PC-3 (cell line): ENCODE measurements at regions of chr3 and their contacts with region 1.

Region 1: DNA sequence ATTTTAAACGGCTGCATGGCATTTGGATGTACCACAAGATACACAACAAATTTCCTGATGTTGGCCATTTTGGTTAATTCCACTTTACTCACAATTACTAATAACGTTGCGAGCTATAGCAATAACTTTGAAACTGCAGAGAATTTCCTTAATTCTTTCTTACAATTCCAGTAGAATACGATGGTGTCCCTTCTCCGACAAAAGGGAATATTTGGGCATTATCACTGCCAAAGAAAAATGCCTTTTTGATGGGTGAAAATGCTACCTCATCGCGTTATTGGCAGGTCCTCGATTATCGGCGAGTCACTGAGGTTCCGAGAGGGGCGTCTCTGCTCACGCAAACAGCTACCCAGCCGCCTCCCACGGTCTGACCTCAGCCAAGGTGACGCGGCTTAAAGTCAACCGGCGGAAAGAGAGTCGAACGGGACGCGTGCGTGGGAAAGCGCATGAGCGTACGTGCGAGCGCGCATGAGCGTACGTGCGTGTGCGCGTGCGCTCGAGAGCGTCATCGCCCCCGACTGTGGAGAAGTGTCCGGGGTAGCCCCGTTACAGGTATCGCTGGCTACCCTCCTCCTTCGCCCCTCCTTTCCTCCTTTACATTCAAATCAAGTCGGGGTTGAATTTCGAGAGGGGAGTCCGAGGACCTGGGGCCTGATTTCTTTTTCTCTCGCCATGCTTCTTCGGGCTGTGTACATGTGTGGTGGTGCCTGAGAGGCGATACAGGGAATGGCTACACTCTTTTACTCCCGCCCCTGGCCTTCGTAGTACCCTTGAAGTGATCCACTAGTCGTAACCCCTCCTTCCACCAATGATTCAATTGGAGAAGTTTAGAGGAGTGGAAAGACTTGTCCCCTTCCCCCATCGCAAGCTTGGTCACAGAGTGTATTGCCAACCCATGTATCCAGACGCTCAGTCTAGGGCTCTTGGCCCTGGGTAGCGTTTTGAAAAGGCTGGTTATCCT is at the start of gene OXSM:
- DNase-seq: peak; percentile 96
- ATAC-seq: peak; percentile 90
- H3K4me3 ChIP-seq: peak within 1 kb of the TSS; percentile 86
- H3K27ac ChIP-seq: peak within 1 kb of the TSS; percentile 44
- H3K4me1 ChIP-seq: peaks cover 32% of the 10 kb centered on the region
- H3K27me3 ChIP-seq: no peaks in the 10 kb centered on the region
- CTCF ChIP-seq: no peak
- total RNA-seq, gene OXSM: 13.7 and 21.4 TPM in 2 replicates

Region 2: DNA sequence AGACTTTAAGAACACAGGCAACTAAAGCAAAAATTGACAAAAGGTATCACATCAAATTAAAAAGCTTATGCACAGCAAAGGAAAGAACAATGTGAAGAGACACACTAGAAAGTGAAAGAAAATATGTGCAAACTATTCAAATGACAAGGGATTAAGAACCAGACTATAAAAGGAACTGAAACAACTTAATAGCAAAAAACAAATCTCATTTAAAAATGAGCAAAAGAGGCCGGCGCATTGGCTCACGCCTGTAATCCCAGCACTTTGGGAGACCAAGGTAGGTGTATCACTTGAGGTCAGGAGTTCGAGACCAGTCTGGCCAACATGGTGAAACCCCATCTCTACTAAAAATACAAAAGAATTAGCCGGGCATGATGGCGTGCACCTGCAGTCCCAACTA is 21.0 kb before region 1 on chr3:
- CTCF ChIA-PET with region 1: no interaction called
- POLR2A ChIA-PET with region 1: no interaction called
- intact Hi-C with region 1: no loop called
- DNase-seq: no peak
- ATAC-seq: no peak
- H3K4me3 ChIP-seq: no peak overlapping the region
- H3K27ac ChIP-seq: no peak overlapping the region
- H3K4me1 ChIP-seq: no peaks in the 10 kb centered on the region
- H3K27me3 ChIP-seq: no peaks in the 10 kb centered on the region
- CTCF ChIP-seq: no peak

Region 3: GRCh38 chr3:25820366-25820765 is 30.5 kb after region 1 on chr3:
- CTCF ChIA-PET with region 1: no interaction called
- POLR2A ChIA-PET with region 1: no interaction called
- intact Hi-C with region 1: loop called (anchors 2 kb)
- DNase-seq: peak; percentile 87
- ATAC-seq: peak; percentile 88
- H3K4me3 ChIP-seq: no peak overlapping the region
- H3K27ac ChIP-seq: peak overlapping the region; percentile 43
- H3K4me1 ChIP-seq: peaks cover 15% of the 10 kb centered on the region
- H3K27me3 ChIP-seq: no peaks in the 10 kb centered on the region
- CTCF ChIP-seq: no peak

Region 4: DNA sequence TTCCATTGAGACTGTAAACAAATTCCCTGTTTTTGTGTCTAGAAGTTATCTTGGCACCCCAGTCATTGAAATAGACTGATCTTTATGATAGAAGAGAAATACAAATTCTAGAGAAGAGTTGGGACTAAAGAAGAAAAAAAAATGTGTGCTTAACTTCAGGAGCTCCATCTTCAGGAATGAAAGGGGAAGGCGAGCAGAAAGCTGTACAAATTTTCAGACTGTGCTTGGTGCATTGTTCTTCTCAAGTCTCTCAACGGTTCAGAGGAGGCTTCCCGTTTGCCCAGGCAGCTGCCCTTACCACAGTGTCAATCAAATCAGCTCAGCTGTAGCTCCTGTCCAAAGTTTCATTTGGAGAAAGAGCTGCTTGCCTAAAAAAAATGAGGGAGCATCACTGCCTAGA is 41.7 kb after region 1 on chr3:
- CTCF ChIA-PET with region 1: no interaction called
- POLR2A ChIA-PET with region 1: no interaction called
- intact Hi-C with region 1: loop called (anchors 5 kb)
- DNase-seq: peak; percentile 46
- ATAC-seq: peak; percentile 94
- H3K4me3 ChIP-seq: no peak overlapping the region
- H3K27ac ChIP-seq: no peak overlapping the region
- H3K4me1 ChIP-seq: no peaks in the 10 kb centered on the region
- H3K27me3 ChIP-seq: no peaks in the 10 kb centered on the region; the same call in 1 of the 2 replicates
- CTCF ChIP-seq: peak; percentile 53

Region 5: GRCh38 chr3:26018889-26019288 is 229.0 kb after region 1 on chr3:
- CTCF ChIA-PET with region 1: no interaction called
- POLR2A ChIA-PET with region 1: no interaction called
- intact Hi-C with region 1: no loop called
- DNase-seq: no peak
- ATAC-seq: no peak
- H3K4me3 ChIP-seq: no peak overlapping the region
- H3K27ac ChIP-seq: no peak overlapping the region
- H3K4me1 ChIP-seq: no peaks in the 10 kb centered on the region
- H3K27me3 ChIP-seq: no peaks in the 10 kb centered on the region
- CTCF ChIP-seq: no peak